ENCODE measurements at regions of chr15 and their contacts with region 1.

Region 1: DNA sequence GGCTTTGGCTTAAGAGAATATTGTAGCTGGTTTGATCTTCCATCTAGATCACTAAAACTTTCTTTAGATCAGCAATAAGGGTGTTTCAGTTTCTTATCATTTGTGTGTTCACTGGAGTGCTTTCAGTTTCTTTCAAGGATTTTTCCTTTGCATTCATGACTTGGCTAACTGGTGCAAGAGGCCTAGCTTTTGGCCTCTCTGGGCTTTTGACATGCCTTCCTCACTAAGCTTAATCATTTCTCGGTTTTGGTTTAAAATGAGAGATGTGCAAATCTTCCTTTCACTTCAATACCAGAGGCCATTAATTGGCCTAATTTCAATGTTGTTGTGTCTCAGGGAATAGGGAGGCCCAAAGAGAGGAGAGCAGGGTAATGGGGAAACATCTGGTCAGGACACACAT is 30.3 kb upstream of the CCNB2 start:
- DNase-seq: peak; percentile 63
- H3K4me3 Mint-ChIP-seq: peak overlapping the region; percentile 18
- H3K27ac Mint-ChIP-seq: peak overlapping the region; percentile 80
- H3K4me1 Mint-ChIP-seq: peaks cover 11% of the 10 kb centered on the region
- H3K27me3 Mint-ChIP-seq: no peaks in the 10 kb centered on the region

Region 2: DNA sequence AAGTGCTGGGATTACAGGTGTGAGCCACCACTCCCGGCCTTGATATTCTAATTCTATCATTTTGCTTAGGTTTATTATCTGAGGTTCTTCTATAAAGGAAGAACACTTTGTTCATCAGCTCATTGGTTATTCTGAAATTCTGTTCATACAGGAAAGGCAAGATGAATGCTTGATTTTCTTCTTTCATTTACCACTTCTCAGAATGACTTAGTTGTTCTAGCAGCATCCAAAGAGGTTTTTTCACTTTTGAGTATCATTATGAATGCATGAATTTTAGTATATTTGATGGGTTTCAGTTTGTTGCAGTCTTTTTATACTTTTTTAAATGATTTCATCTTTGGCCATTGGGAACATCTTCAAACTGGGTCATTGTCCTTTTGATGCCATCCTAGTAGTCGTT is 35.4 kb before region 1 on chr15:
- intact Hi-C with region 1: loop called (anchors 5 kb)
- DNase-seq: no peak
- H3K4me3 Mint-ChIP-seq: peak overlapping the region; percentile 49
- H3K27ac Mint-ChIP-seq: peak overlapping the region; percentile 80
- H3K4me1 Mint-ChIP-seq: peaks cover 43% of the 10 kb centered on the region
- H3K27me3 Mint-ChIP-seq: no peaks in the 10 kb centered on the region

Region 3: DNA sequence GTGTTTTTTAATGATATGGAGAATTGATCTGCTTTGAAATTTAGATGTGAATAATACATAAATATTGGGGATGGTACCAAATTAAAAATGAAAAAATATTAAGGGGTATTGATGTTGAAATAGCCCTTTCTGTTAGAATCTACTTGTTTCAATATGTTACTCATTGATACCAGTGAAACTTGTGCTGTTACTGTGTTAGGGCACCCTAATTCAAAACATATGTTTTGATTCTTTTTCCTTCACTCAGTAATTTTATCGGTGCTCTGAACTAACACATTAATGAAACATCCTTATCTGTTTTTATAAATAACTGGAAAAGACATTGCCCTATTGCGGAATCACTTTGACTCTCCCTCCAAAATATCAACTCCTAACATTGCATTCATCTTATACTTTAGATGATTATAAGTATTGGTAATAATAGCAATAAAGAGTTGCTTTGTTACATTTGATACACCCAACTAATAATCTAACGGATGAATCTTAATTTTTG is 21.6 kb before region 1 on chr15:
- intact Hi-C with region 1: loop called (anchors 1 kb)
- DNase-seq: no peak
- H3K4me3 Mint-ChIP-seq: no peak overlapping the region
- H3K27ac Mint-ChIP-seq: no peak overlapping the region
- H3K4me1 Mint-ChIP-seq: peaks cover 19% of the 10 kb centered on the region
- H3K27me3 Mint-ChIP-seq: no peaks in the 10 kb centered on the region